ENCODE measurements at regions of chr1 and their contacts with region 1.

Region 1: GRCh38 chr1:204207136-204207616 is 6.6 kb downstream of the GOLT1A start:
- DNase-seq: peak; percentile 19
- ATAC-seq: peak; percentile 98
- H3K4me3 ChIP-seq: no peak overlapping the region
- H3K27ac ChIP-seq: no peak overlapping the region
- H3K4me1 ChIP-seq: peaks cover 30% of the 10 kb centered on the region
- H3K27me3 ChIP-seq: no peaks in the 10 kb centered on the region
- CTCF ChIP-seq: peak; percentile 95
- EP300 ChIP-seq: no peak
- POLR2A ChIP-seq: no peak
- RAD21 ChIP-seq: peak; percentile 81

Region 2: DNA sequence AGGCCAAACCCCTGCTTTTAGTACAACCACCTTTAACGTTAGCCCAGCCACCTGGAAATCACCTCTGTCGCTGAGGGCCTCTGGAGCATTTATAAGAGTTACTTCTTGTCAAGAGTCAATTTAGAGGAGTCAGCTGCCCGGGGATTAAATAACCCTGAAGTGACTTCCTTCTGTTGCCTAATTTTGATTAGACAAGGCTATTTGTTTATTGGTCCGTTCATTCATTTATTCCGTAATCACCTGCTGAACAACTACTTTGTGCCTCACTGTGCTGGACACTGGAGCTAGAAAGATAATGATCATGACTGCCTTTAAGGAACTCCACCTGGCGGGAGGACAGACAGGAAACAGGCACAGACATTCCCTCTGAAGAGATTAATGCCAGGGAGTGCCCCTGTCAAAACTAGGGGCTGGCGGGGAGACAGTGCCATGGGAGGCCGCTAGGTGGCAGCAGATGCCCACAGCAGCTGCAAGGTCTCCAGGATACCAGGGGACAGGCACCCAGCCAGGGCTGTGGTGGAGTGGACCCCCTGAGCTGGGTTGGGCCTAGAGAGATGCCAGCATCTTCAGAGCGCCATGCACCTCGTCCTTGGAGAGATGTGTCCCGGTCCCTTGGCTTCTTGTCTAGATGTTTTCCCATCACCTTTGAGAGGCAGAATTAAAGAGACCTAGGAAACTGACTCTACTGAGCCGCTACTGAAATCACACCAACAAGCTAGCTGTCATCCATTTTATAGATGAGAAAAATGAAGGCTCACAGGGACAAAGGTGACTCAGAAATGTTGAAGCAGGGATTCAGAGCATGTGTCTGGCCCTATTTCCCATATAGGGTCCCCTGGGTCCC is 44.7 kb before region 1 on chr1:
- CTCF ChIA-PET with region 1: interaction called, 48 read pairs
- POLR2A ChIA-PET with region 1: interaction called, 4 read pairs
- in situ Hi-C with region 1: loop called (anchors 5 kb)
- intact Hi-C with region 1: loop called (anchors 1 kb)
- DNase-seq: peak; percentile 60
- ATAC-seq: peak; percentile 92
- H3K4me3 ChIP-seq: no peak overlapping the region
- H3K27ac ChIP-seq: no peak overlapping the region
- H3K4me1 ChIP-seq: peaks cover 36% of the 10 kb centered on the region
- H3K27me3 ChIP-seq: peaks cover 5 to 30% of the 10 kb centered on the region in 2 experiments; a peak in 3 of 5 replicates
- CTCF ChIP-seq: peak; percentile 97
- EP300 ChIP-seq: no peak
- POLR2A ChIP-seq: no peak
- RAD21 ChIP-seq: peak; percentile 96

Region 3: DNA sequence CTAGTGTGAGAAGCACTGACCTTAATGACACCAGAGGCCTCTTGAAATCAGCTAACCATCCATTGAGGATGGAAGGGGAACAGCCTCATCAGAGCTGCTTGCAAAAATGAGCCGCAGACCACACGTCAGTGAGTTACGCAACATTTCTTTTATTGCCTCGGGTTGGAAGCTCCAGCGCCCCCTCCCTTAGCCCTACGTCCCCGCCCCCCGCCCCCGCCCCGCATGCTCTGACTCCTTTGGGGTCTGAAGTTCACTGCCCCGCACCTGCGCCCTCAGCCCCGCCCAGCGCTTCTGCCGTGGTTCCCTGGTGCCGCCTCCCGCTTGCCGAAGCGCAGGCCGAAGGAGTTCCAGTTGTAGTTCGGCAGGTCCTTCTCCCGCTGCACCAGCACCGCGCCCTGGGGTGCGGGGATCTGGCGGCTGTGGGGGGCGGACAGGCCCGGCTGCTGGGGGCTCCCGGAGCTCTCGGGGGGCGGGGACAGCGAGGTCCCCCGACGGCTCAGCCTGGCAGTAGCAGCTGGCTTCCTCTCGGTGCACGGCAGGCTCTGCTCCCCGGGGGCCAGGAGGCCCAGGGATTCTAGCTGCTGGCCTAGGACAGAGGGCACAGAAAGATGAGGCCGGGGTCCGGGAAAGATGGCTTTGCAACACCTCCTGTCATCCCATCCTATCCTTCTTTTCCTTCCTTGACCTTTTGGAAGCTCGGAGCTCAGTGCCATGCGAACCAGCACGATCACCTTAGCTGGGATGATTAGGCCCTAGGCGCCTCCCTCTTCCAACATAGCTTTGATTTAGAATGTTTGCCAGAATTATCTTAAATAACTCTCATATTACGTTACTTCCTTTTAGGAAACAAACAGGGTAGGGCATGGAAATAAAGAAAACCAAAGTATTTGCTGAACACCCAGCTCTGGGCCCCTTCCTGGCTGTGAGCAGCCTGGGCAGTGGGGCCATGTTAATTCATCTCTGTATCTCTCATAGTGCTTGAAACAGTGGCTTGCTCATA is 16.7 kb before region 1 on chr1:
- CTCF ChIA-PET with region 1: no interaction called
- POLR2A ChIA-PET with region 1: no interaction called
- in situ Hi-C with region 1: no loop called
- intact Hi-C with region 1: no loop called
- DNase-seq: peak; percentile 60
- ATAC-seq: peak; percentile 75
- H3K4me3 ChIP-seq: peak overlapping the region; percentile 24 to 61 (median 55); a peak in 4 of 6 replicates
- H3K27ac ChIP-seq: no peak overlapping the region
- H3K4me1 ChIP-seq: peaks cover 40% of the 10 kb centered on the region
- H3K27me3 ChIP-seq: peaks cover 6 to 45% of the 10 kb centered on the region in 2 experiments; a peak in 4 of 5 replicates
- CTCF ChIP-seq: peak; percentile 21; the same call in 1 of the 2 replicates
- EP300 ChIP-seq: no peak
- POLR2A ChIP-seq: no peak
- RAD21 ChIP-seq: no peak

Region 4: GRCh38 chr1:204257954-204258752 is 51.0 kb after region 1 on chr1:
- CTCF ChIA-PET with region 1: no interaction called
- POLR2A ChIA-PET with region 1: no interaction called
- in situ Hi-C with region 1: no loop called
- intact Hi-C with region 1: no loop called
- DNase-seq: peak; percentile 42
- ATAC-seq: peak; percentile 67
- H3K4me3 ChIP-seq: no peak overlapping the region
- H3K27ac ChIP-seq: no peak overlapping the region
- H3K4me1 ChIP-seq: peaks cover 38% of the 10 kb centered on the region
- H3K27me3 ChIP-seq: no peaks in the 10 kb centered on the region
- CTCF ChIP-seq: peak; percentile 85
- EP300 ChIP-seq: no peak
- POLR2A ChIP-seq: no peak
- RAD21 ChIP-seq: peak; percentile 83